ENCODE measurements at regions of chr5 and their contacts with region 1.

Region 1: GRCh38 chr5:74766849-74767578 is at the starts of genes GFM2 and NSA2:
- DNase-seq: peak; percentile 91 to 95
- ATAC-seq: peak; percentile 97
- total RNA-seq, gene GFM2: 21.8 to 22.1 TPM
- total RNA-seq, gene NSA2: 65.7 to 66.0 TPM

Region 2: DNA sequence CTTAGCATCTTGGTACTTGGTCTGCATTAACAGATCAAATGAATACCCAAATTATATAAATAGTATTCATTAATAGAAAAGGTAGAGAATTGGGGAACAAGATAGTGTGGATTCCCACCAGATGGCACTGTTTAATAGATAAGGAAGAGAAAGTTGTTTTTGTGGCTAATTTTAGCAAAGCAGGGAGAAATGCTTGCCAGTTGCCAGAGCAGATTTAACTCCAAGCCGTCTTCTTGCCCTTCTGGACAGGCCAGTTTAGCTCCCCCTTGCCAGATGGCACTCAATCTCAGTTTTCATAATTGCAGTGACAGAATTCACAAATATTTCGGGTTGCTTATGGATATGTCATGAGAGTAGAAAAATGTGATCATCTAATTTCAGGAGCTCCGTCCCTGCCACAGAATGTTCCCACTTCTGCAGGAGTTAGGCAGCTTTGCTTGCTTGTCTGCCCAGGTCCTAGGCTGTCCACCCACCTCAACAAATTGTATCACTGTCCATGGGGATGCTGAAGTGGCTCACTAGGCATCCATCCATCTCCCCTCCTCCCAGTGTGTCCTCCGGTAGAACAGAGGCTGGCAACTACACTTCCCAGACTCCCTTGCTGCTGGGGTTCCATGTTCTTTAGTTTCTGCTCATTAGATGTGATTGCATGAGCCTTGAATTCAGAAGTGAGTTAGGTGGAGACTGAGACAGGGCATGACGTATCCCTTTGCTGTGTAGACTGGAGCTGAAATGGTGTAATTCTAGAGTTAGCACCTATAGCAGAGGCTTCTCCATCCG is 93.8 kb before region 1 on chr5:
- intact Hi-C with region 1: no loop called
- DNase-seq: no peak
- ATAC-seq: no peak

Region 3: GRCh38 chr5:74927336-74927735 is 160.3 kb after region 1 on chr5:
- intact Hi-C with region 1: loop called in 1 of 2 experiments (anchors 10 kb)
- DNase-seq: no peak
- ATAC-seq: no peak

Region 4: DNA sequence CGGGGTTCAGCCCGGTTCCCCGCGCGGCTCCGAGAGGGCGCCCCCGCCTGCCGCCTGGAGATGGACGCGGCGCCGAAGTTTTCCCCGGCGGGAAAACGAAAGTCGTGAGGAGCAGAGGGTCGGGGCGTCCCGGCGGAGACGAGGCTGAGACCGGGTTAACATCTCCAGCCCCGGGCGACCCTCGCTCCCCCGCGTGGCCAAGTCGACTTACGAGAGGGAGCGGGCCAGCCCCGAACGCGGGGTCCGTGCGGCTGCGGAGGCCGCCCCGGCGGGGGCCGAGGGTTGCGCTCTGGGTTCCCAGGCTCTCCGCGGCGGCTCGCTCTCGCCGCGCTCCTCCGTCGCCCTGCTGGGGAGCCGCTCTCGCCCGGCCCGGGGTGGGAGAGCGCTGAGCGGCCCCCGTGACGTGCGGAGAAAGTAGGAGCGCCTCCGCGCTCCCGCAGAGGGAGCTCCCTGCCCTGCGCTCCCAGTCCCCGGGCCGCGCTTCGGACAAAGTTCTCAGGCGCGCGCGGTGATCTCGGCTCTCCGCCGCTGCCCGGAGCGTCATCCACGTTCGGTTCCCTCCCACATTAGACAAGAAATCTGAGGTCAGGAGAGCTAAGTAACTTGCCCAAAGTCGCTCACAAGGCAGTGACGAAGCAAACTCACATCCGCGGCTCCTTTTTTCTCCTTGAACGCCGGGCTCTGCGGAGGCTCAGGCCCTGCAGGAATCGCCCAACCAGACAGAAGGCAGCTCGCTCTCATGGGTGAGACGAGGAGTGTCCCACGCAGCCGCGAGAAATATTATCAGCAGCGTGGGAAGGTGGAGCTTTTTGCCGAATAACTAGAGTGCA is 286.5 kb after region 1 on chr5:
- intact Hi-C with region 1: loop called in 1 of 2 experiments (anchors 10 kb)
- DNase-seq: peak; percentile 41 to 69
- ATAC-seq: peak; percentile 66